AG04450 (cell line): ENCODE measurements at regions of chr3 and their contacts with region 1.

Region 1: DNA sequence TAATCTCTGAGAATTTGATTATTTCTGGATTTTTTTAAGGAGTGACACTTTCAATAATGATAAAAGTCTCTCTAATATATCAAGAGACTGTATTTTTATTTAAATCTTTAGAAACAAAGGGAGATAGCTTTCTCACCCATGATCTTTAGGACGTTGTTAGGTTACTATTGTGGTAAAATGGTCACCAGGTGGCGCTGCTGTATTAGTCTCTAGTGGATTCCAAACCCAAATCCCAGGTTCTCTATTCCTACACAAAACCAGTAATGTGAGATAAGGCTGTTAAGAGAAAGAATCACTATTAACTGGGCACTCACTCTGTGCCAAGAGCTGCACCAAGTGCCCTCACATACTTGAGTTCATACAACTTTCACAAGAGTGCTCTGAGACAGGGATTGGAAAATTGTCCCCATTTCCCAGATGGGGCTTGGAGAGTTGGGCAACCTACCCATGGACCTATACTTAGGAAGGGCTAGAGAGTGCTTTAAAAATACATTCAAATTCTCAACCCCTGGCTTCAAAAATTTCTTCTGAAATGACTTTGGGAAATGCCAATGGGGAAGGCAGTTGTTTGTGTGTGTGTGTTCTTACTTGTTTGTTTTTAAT is 593.4 kb upstream of the TGFBR2 start:
- DNase-seq: peak; percentile 24
- H3K4me3 ChIP-seq: no peak overlapping the region
- H3K27ac ChIP-seq: no peak overlapping the region
- H3K27me3 ChIP-seq: no peaks in the 10 kb centered on the region
- CTCF ChIP-seq: peak; percentile 72

Region 2: DNA sequence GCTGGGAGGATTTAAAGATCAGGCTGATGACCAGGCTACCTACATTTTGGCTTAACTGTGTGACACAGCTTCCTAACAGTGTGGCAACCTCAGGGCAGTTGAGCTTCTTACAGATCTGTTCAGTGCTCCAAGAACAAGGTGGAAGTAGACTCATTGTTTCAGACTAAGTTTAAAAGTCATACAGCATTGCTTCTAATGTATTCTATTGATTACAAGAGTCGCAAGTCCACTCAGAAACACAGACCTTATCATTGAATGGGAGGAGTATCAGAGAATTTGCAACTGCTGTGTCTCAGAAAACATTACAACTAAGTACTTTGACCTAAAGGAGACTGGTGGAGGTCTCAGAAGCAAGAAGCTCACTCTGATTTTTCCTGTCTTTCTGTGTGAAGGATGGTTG is 13.8 kb after region 1 on chr3:
- CTCF ChIA-PET with region 1: interaction called, 12 read pairs
- POLR2A ChIA-PET with region 1: no interaction called
- DNase-seq: no peak
- H3K4me3 ChIP-seq: no peak overlapping the region
- H3K27ac ChIP-seq: no peak overlapping the region
- H3K27me3 ChIP-seq: no peaks in the 10 kb centered on the region
- CTCF ChIP-seq: no peak

Region 3: DNA sequence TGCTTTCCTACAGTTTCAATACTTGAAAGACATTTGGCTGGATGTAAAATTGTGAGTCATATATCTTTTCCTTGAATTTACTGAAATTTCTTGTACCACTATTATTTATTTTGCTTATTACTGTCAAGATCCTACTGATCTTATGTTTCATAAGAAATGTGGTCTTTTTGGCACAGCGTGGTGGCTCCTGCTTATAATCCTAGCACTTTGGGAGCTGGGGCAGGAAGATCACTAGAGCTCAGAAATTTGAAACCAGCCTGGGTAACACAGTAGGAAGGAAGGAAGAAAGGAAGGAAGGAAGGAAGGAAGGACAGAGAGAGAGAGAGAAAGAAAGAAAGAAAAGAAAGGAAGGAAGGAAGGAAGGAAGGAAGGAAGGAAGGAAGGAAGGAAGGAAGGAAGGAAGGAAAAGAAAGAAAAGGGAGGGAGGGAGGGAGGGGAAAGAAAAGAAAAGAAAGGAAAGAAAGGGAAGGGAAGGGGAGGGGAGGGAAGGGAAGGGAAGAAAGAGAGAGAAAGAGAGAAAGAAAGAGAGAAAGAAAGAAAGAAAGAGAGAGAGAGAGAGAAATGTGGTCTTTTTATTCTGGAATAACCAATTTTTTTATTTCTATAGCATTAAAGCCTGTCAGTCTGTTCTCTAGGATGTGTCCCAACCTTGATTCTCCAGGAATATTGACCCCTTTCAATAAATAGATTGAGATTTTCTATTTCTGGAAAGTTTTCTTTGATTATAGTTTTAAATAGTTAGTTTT is 21.4 kb after region 1 on chr3:
- CTCF ChIA-PET with region 1: interaction called, 12 read pairs
- POLR2A ChIA-PET with region 1: no interaction called
- DNase-seq: no peak
- H3K4me3 ChIP-seq: no peak overlapping the region
- H3K27ac ChIP-seq: no peak overlapping the region
- H3K27me3 ChIP-seq: no peaks in the 10 kb centered on the region
- CTCF ChIP-seq: no peak

Region 4: DNA sequence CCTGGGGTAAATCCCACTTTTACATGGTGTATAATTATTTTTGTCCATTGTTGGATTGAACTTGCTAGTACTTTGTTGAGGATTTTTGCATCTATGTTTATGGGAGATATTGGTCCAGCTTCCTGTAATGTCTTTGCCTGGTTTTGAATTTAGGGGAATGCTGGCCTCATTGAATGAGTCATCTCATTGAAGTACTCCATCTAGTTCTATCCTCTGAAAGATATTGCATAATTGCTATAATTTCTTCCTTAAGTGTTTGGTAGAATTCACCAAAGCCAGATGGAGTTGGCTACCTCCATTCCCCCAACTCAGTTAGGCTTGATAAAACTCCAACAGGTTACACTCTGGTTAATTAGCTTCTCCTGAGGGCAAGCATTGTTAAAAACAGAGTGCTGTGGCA is 355.9 kb after region 1 on chr3:
- CTCF ChIA-PET with region 1: no interaction called
- POLR2A ChIA-PET with region 1: no interaction called
- DNase-seq: no peak
- H3K4me3 ChIP-seq: no peak overlapping the region
- H3K27ac ChIP-seq: no peak overlapping the region
- H3K27me3 ChIP-seq: no peaks in the 10 kb centered on the region
- CTCF ChIP-seq: no peak